Activated B cell treated with CpG ODN at 0.5 μM for 24 hours (primary cell): ENCODE measurements at regions of chrX and their contacts with region 1.

Region 1: DNA sequence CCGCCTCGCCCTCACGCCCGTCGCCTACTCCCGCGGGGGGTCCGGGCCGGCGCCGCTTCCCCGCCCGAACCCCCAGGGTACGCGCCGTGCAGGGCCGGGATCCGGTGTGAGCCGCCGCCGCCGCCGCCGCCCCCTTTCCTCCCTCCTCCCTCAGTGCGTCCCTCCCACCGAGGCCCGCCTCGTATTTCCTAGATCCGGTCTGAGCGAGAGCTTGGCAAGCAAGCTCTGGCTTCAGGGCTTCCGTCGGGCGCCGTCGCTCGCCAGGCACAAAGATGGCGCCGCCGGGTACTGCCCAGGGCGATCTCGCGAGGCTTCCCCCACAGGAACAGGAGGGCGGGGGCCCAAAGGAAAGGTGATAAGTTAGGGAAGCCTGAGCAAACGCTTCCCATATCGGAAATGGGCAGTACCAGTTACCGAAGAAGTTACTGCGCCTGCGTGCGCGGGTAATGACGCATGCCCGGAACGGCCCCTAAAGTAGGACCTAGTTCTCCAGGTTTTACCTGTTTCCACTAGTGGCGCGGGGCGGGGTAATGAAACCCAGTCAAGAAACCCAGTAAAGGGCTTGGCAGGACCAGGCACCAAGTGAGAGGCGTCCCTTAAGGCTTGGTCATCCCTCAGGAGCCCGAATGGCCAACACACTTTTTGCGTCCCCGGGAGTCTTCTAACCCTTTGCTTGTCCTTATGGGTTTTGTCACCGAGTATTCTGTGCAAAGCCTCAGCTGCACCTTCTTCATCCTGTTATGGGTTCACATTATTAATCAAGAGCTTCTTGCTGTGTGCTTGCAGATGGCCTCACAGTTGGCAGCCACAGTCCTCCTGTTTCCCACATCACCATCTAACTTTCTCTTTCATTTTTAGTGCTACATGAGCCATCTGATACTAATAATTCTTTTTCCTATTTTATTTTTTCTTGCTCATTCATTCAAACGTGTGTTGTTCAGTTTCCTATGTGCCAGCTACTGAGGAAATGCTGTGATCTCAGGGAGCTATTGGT is at the start of gene TAB3:
- DNase-seq: peak; percentile 80
- ATAC-seq: peak; percentile 92
- H3K4me3 Mint-ChIP-seq: peak within 1 kb of the TSS; percentile 91
- H3K27ac Mint-ChIP-seq: peak within 1 kb of the TSS; percentile 94
- H3K4me1 Mint-ChIP-seq: peaks cover 23% of the 10 kb centered on the region
- H3K27me3 Mint-ChIP-seq: no peaks in the 10 kb centered on the region
- CTCF ChIP-seq: no peak
- total RNA-seq, gene TAB3: 21.7 and 23.9 TPM in 2 replicates

Region 2: DNA sequence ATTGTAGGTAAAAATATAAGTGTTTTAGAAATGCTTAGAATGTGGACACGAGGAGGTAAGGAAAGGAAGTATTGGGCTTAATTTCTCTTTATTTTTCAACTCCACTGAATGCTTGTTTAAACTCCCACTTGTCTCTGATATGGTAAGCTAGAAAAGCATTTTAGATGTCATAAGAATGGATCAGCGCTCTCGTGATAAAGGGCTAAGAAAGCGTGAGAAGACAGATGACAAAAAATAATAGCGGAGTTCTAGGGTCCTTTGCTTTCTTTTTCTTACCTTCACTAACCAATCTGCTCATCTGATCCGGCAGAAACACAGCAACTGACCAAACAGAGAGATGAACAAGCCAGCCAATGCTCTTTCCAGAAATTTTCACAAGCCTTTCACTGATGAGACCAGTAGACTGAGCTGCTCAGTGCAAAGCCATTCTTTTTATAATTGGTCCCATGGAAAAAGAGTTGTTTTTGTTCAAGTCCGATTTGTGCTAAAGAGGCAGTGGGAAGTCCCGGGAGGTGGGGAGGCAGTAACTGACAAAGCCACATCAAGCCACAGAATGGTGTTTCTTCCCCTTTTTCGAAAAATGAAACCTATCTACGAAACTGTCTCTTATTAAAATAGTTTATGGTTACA is 312.0 kb before region 1 on chrX and contains the start of gene TASL:
- CTCF ChIA-PET with region 1: no interaction called
- POLR2A ChIA-PET with region 1: interaction called, 3 read pairs
- intact Hi-C with region 1: loop called (anchors 2 kb)
- DNase-seq: peak; percentile 17
- ATAC-seq: peak; percentile 84
- H3K4me3 Mint-ChIP-seq: peak within 1 kb of the TSS; percentile 93
- H3K27ac Mint-ChIP-seq: peak within 1 kb of the TSS; percentile 96
- H3K4me1 Mint-ChIP-seq: peaks cover 37% of the 10 kb centered on the region
- H3K27me3 Mint-ChIP-seq: no peaks in the 10 kb centered on the region
- CTCF ChIP-seq: no peak
- total RNA-seq, gene TASL: 27.0 and 27.7 TPM in 2 replicates

Region 3: GRCh38 chrX:30791296-30792278 is 97.9 kb before region 1 on chrX:
- CTCF ChIA-PET with region 1: no interaction called
- POLR2A ChIA-PET with region 1: no interaction called
- intact Hi-C with region 1: no loop called
- DNase-seq: no peak
- ATAC-seq: no peak
- H3K4me3 Mint-ChIP-seq: no peak overlapping the region
- H3K27ac Mint-ChIP-seq: no peak overlapping the region
- H3K4me1 Mint-ChIP-seq: no peaks in the 10 kb centered on the region
- H3K27me3 Mint-ChIP-seq: no peaks in the 10 kb centered on the region
- CTCF ChIP-seq: no peak

Region 4: GRCh38 chrX:30822068-30822681 is 67.3 kb before region 1 on chrX:
- CTCF ChIA-PET with region 1: no interaction called
- POLR2A ChIA-PET with region 1: no interaction called
- intact Hi-C with region 1: loop called (anchors 1 kb)
- DNase-seq: no peak
- ATAC-seq: peak; percentile 89
- H3K4me3 Mint-ChIP-seq: no peak overlapping the region
- H3K27ac Mint-ChIP-seq: peak overlapping the region; percentile 88
- H3K4me1 Mint-ChIP-seq: peaks cover 25% of the 10 kb centered on the region
- H3K27me3 Mint-ChIP-seq: no peaks in the 10 kb centered on the region
- CTCF ChIP-seq: no peak